ENCODE measurements at regions of chr1 and their contacts with region 1.

Region 1: GRCh38 chr1:201042779-201043461 is 19.4 kb upstream of the KIF21B start:
- DNase-seq: peak; percentile 81
- ATAC-seq: peak; percentile 91
- H3K4me3 ChIP-seq: no peak overlapping the region
- H3K4me3 Mint-ChIP-seq: no peak overlapping the region
- H3K27ac ChIP-seq: no peak overlapping the region
- H3K27ac Mint-ChIP-seq: peak overlapping the region; percentile 1
- H3K4me1 ChIP-seq: peaks cover 0 to 2% of the 10 kb centered on the region in 2 donors
- H3K4me1 Mint-ChIP-seq: peaks cover 3% of the 10 kb centered on the region
- H3K27me3 ChIP-seq: peaks cover 0 to 3% (median 1%) of the 10 kb centered on the region in 4 experiments
- H3K27me3 Mint-ChIP-seq: peaks cover 3% of the 10 kb centered on the region
- CTCF ChIP-seq: peak; percentile 93

Region 2: GRCh38 chr1:200558866-200559459 is 484.0 kb before region 1 on chr1:
- CTCF ChIA-PET with region 1: interaction called, 7 read pairs
- POLR2A ChIA-PET with region 1: no interaction called
- intact Hi-C with region 1: loop called (anchors 10 kb)
- DNase-seq: peak; percentile 51
- ATAC-seq: no peak
- H3K4me3 ChIP-seq: no peak overlapping the region
- H3K4me3 Mint-ChIP-seq: no peak overlapping the region
- H3K27ac ChIP-seq: no peak overlapping the region
- H3K27ac Mint-ChIP-seq: no peak overlapping the region
- H3K4me1 ChIP-seq: no peaks in the 10 kb centered on the region
- H3K4me1 Mint-ChIP-seq: peaks cover 1% of the 10 kb centered on the region
- H3K27me3 ChIP-seq: no peaks in the 10 kb centered on the region
- H3K27me3 Mint-ChIP-seq: no peaks in the 10 kb centered on the region
- CTCF ChIP-seq: peak; percentile 75

Region 3: DNA sequence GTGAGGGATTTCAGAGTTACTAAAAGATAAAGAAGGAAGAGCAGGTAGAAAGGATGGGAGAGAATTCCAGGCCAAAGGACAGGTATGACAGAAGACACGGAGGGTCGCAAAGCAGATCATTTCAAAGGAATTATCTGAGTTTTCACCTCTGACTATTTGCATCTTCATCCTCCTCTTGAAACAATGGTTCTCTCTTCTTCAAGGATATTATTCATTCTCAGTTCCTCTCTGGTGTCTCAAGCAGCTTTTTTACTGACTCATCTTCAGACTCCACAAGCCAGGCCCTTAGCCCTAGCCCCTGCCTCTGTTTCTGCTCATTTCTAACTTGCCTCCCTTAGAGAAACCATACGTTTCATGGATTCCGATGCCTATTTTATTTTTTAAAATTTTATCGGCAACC is 388.3 kb before region 1 on chr1:
- CTCF ChIA-PET with region 1: no interaction called
- POLR2A ChIA-PET with region 1: no interaction called
- intact Hi-C with region 1: no loop called
- DNase-seq: no peak
- ATAC-seq: no peak
- H3K4me3 ChIP-seq: no peak overlapping the region
- H3K4me3 Mint-ChIP-seq: no peak overlapping the region
- H3K27ac ChIP-seq: no peak overlapping the region
- H3K27ac Mint-ChIP-seq: peak overlapping the region; percentile 1
- H3K4me1 ChIP-seq: peaks cover 0 to 7% of the 10 kb centered on the region in 2 donors
- H3K4me1 Mint-ChIP-seq: peaks cover 24% of the 10 kb centered on the region
- H3K27me3 ChIP-seq: no peaks in the 10 kb centered on the region
- H3K27me3 Mint-ChIP-seq: no peaks in the 10 kb centered on the region
- CTCF ChIP-seq: no peak

Region 4: DNA sequence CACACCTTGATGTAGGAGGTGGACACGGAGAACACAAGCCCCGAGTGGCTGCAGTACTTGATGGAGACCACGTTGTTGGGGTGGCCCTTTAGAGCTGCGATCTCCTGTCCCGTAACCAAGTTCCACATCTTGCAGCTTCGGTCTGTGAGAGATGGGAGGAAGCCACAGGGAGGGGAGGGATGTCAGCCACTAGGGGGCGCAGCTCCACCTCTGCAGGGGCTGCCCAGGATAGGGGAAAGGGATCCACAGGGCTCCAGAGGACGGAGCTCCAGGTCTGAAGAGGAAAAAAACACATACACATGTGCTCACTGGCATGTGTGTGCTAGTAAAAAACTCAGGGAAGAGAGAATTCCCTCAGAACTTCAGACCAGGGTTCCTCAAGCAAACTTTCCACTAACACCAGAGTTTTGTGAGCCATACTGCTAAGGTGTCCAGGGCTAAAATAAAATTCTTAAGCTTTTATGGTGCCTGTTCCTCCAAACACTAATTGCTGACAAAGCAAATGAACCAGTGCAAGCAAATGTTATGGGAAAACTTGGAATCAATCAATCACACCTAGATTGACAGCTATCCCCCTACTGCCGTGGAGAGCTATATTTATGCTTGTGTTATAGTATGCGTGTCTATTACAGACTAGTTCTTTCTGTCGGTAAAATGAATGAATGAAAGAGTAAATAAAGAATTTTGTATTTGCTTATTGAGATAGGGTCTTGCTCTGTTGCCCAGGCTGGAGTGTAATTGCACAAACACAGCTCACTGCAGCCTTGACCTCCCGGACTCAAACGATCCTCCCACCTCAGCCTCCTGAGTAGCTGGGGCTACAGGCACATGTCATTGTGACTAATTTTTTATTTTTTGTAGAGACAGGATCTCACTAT is 63.1 kb before region 1 on chr1:
- CTCF ChIA-PET with region 1: interaction called, 303 read pairs
- POLR2A ChIA-PET with region 1: no interaction called
- intact Hi-C with region 1: loop called (anchors 1 kb)
- DNase-seq: peak; percentile 68
- ATAC-seq: peak; percentile 54
- H3K4me3 ChIP-seq: no peak overlapping the region
- H3K4me3 Mint-ChIP-seq: no peak overlapping the region
- H3K27ac ChIP-seq: no peak overlapping the region
- H3K27ac Mint-ChIP-seq: no peak overlapping the region
- H3K4me1 ChIP-seq: no peaks in the 10 kb centered on the region
- H3K4me1 Mint-ChIP-seq: no peaks in the 10 kb centered on the region
- H3K27me3 ChIP-seq: no peaks in the 10 kb centered on the region
- H3K27me3 Mint-ChIP-seq: no peaks in the 10 kb centered on the region
- CTCF ChIP-seq: peak; percentile 80

Region 5: GRCh38 chr1:200992382-200993048 is 50.4 kb before region 1 on chr1:
- CTCF ChIA-PET with region 1: interaction called, 12 read pairs
- POLR2A ChIA-PET with region 1: no interaction called
- intact Hi-C with region 1: no loop called
- DNase-seq: no peak
- ATAC-seq: no peak
- H3K4me3 ChIP-seq: no peak overlapping the region
- H3K4me3 Mint-ChIP-seq: no peak overlapping the region
- H3K27ac ChIP-seq: no peak overlapping the region
- H3K27ac Mint-ChIP-seq: no peak overlapping the region
- H3K4me1 ChIP-seq: no peaks in the 10 kb centered on the region
- H3K4me1 Mint-ChIP-seq: no peaks in the 10 kb centered on the region
- H3K27me3 ChIP-seq: no peaks in the 10 kb centered on the region
- H3K27me3 Mint-ChIP-seq: no peaks in the 10 kb centered on the region
- CTCF ChIP-seq: no peak

Region 6: DNA sequence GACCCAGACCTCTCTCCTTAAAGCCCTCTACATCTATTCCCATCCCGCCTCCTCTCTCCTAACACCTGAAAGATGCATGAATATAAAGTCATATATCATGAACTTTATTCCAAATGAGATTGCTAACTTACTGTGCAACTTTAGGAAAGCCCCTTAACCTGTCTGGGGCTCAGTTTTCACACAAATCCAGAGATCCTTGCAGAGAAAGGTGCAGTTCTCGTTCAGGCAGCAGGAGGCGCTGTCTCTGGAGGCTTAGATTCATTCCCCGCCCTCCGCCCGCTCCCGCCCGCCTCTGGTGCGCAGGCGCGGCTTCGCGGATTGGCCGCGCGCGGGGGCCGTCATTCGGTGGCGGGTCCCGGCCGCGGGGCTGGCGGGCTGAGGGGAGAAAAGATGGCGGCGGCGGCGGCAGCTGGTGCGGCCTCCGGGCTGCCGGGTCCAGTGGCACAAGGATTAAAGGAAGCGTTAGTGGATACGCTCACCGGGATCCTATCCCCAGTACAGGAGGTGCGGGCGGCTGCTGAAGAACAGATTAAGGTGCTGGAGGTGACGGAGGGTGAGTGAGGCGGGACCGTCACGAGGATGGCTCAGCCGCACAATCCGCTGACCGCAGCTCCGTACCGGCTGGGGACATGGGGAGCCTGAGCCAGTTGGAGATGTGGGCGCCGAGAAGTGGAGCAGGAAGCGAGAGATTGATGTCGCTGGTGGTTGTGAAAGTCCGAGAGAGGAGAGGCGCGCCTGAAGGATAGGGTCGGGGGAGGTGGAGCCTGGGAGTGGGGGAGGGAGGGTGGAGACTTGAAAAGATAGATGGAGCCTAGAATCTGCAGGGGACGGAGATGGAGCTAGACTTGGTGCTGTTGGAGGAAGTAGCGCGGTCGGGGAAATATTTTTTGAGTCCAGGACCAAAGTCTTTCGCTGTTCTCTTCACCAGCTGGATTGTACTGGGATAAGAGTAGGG is 786.2 kb after region 1 on chr1 and contains the start of gene IPO9:
- CTCF ChIA-PET with region 1: no interaction called
- POLR2A ChIA-PET with region 1: no interaction called
- intact Hi-C with region 1: no loop called
- DNase-seq: peak; percentile 96
- ATAC-seq: peak; percentile 95
- H3K4me3 ChIP-seq: peak within 1 kb of the TSS; percentile 72 to 100 (median 96)
- H3K4me3 Mint-ChIP-seq: peak within 1 kb of the TSS; percentile 95
- H3K27ac ChIP-seq: peak within 1 kb of the TSS; percentile 84 to 95
- H3K27ac Mint-ChIP-seq: peak within 1 kb of the TSS; percentile 93
- H3K4me1 ChIP-seq: peaks cover 12 to 19% of the 10 kb centered on the region in 2 donors
- H3K4me1 Mint-ChIP-seq: peaks cover 43% of the 10 kb centered on the region
- H3K27me3 ChIP-seq: no peaks in the 10 kb centered on the region
- H3K27me3 Mint-ChIP-seq: no peaks in the 10 kb centered on the region
- CTCF ChIP-seq: peak; percentile 99
- total RNA-seq, gene IPO9: 56.9 and 57.0 TPM in 2 replicates

Measured in B cell (primary cell).